Activated CD4-positive, alpha-beta T cell treated with anti-CD3 and anti-CD28 coated beads, Interleukin-2, amount 10 ng/mL, durations not matched to agents 24 days and 14 days (primary cell): ENCODE measurements at regions of chr11 and their contacts with region 1.

Region 1: DNA sequence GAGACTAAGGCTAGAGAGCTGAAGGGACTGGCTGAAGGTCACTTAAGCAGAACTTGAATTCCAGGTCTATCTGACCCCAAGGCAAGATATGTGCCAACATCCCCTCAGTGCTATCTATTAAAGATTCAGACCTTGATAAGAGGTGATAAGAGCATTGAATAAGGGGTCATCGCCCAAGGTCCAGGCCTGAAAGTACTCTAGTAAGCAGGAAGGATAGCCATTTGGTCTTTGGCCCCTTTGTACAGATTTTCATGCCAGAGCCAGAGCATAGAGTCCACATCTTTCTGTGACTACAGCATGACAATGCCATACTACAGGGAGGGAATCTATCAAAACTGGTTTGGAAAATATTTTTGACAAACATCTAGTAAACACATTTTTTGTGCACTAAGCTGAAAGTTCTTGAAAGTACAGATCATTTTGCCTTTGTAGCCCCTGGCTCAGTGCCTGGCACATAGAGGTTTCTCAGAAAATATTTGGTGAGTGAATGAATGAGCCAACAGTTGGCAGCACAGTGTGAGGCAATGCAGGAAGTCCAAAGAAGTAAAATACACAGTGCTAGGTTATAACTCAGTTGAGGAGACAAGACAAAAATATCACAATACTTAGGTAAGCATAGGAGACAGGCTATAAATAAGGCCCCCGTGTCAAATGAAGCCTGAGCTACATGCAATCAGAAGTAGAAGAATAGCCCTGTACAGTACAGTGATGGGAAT is 15.1 kb upstream of the RRAS2 start:
- DNase-seq: no peak
- H3K4me3 Mint-ChIP-seq: no peak overlapping the region
- H3K27ac Mint-ChIP-seq: peak overlapping the region; percentile 68
- H3K4me1 Mint-ChIP-seq: peaks cover 48% of the 10 kb centered on the region
- H3K27me3 Mint-ChIP-seq: peaks cover 5% of the 10 kb centered on the region

Region 2: GRCh38 chr11:14413307-14414069 is 39.4 kb after region 1 on chr11:
- intact Hi-C with region 1: loop called (anchors 2 kb)
- DNase-seq: no peak
- H3K4me3 Mint-ChIP-seq: no peak overlapping the region
- H3K27ac Mint-ChIP-seq: no peak overlapping the region
- H3K4me1 Mint-ChIP-seq: peaks cover 62% of the 10 kb centered on the region
- H3K27me3 Mint-ChIP-seq: no peaks in the 10 kb centered on the region